ENCODE measurements at regions of chrX and their contacts with region 1.

Region 1: DNA sequence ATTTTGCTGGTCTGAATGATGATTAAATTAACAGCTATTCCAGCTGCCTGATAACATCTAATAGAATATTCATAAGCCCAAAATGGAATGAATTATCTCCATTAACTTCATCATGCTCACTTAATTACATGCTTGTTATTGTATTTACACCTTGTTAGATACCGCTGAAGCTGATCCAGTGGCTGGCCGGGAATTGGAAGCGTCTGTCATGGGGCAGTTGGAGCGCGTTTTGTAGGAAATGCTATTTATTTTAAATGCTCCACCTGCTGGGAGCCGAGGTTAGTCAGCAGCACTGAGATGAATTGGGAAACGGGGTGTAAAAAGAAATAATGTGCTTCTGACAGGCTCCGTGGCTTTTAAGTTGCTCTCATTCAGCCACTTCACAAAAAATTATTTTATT is 25.2 kb downstream of the ARX start:
- DNase-seq: no peak

Region 2: DNA sequence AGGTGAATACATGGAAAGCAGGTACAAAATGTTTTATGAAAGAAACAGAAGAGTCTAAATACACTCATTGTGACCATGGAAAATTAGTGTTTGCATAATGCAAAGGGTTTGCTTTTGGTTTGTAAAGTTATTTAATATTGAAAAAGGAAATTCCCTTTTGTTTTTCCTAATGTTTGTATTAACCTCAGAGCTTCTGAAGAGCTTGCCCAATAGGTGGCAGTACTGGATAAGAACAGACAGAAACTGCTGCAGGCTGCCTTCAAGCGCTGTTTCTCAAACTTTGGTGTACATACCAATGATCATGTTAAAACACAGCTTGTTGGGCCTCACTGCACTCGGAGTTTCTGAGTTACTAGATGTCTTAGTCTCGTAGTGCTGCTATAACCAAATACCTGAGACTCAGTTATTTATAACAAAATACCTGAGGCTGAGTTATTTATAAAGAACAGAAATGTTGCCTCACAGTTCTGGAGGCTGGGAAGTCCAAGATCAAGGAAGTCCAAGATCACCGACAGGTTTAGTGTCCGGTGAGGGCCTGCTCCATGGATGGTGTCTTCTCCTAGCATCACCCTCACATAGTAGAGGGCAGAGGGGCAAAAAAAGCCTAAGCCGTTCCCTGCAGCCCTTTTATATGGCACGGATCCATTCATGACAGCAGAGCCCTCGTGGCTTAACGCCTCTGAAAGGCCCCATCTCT is 730.8 kb before region 1 on chrX:
- intact Hi-C with region 1: loop called in 1 of 2 experiments (anchors 5 kb)
- DNase-seq: no peak

Region 3: DNA sequence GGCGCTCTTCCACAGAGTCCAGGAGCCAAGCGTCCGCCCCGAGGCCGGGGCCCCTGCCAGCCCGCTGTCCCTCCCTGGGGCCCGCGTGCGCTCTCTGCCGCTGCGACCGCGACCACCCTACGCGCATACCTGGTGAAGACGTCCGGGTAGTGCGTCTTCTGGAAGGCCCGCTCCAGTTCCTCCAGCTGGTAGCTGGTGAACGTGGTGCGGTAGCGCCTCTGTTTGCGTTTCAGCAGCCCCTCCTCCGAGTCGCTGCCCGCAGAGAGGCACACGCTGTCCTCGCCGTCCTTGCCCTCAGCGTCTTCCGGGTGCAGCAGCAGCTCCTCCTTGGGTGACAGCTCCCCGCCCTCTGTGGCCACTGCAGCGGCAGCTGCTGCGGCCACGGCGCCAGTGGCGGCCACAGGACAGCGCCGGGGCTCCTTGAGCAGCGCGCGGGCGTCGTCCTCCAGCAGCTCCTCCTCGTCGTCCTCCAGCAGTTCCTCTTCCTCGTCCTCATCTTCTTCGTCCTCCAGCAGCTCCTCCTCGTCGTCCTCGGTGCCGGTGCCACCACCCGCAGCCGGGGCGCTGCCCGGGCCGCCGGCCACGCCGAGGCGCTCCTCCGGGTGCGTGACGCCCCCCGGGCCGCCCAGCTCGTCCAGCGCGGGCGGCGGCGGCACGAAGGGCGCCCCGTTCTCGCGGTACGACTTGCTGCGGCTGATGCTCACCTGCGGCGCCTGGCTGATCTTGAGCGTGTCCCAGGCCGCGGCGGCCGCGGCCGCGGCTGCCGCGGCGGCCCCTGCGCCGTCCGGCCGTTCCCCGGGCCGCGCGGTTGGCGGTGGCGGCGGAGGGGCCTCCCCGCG is 22.5 kb after region 1 on chrX:
- intact Hi-C with region 1: loop called in 1 of 2 experiments (anchors 1 kb)
- DNase-seq: no peak

Measured in posterior vena cava (tissue), 2 donors.